Ascending aorta (tissue), 2 donors: ENCODE measurements at regions of chr20 and their contacts with region 1.

Region 1: DNA sequence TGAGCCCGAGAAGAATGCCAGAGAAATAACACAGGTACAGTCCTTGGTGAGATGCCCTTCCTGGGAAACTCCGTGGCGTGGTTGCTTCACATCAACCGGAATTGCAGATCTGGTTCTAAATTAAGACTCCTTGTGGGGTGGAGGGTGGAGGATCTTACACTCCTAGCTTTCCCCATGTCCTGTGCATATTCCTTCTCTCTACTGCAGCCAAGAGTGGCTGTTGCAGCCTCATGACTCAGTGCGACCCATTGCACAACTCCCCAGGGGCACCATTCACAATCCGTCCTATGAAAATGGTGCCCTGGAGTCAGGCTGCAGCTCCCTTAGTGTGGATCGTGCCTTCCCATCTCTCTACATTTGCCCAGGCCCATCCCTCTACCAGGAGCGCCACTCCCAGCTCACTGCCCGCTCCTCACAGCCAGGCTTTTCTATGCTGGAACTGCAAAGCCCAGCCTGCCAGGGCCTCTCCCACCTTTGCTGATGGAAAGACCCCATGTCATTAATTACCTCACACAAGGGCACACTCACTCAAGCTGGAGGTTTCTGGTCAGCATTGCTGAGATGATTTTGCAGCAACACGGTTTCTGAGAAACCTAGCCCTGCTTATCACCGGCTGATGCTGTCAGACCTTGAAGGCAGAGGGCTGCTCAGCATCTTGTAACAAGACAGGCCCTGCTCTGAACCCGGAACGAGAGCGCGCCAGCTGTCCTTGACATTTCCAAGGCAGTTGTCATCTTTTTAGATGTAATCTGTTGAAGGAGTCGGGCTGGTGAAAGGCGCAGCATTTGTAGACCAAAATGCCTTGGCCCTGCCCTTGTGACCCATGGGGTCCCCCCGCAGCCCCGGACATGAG is 39.7 kb downstream of the SIRPA start:
- DNase-seq: peak; percentile 43 to 93
- H3K4me3 ChIP-seq: no peak overlapping the region
- H3K27ac ChIP-seq: peak overlapping the region; percentile 32 to 68
- H3K4me1 ChIP-seq: peaks cover 0 to 8% of the 10 kb centered on the region in 2 donors
- H3K27me3 ChIP-seq: no peaks in the 10 kb centered on the region
- CTCF ChIP-seq: no peak

Region 2: GRCh38 chr20:956330-956951 is 978.5 kb before region 1 on chr20:
- intact Hi-C with region 1: no loop called
- DNase-seq: peak in 1 of 2 donors; percentile 75
- H3K4me3 ChIP-seq: no peak overlapping the region
- H3K27ac ChIP-seq: no peak overlapping the region
- H3K4me1 ChIP-seq: no peaks in the 10 kb centered on the region
- H3K27me3 ChIP-seq: no peaks in the 10 kb centered on the region
- CTCF ChIP-seq: peak; percentile 84 to 93 (median 93)

Region 3: GRCh38 chr20:1674361-1674760 is 260.6 kb before region 1 on chr20:
- intact Hi-C with region 1: no loop called
- DNase-seq: no peak
- H3K4me3 ChIP-seq: no peak overlapping the region
- H3K27ac ChIP-seq: no peak overlapping the region
- H3K4me1 ChIP-seq: no peaks in the 10 kb centered on the region
- H3K27me3 ChIP-seq: no peaks in the 10 kb centered on the region
- CTCF ChIP-seq: no peak

Region 4: DNA sequence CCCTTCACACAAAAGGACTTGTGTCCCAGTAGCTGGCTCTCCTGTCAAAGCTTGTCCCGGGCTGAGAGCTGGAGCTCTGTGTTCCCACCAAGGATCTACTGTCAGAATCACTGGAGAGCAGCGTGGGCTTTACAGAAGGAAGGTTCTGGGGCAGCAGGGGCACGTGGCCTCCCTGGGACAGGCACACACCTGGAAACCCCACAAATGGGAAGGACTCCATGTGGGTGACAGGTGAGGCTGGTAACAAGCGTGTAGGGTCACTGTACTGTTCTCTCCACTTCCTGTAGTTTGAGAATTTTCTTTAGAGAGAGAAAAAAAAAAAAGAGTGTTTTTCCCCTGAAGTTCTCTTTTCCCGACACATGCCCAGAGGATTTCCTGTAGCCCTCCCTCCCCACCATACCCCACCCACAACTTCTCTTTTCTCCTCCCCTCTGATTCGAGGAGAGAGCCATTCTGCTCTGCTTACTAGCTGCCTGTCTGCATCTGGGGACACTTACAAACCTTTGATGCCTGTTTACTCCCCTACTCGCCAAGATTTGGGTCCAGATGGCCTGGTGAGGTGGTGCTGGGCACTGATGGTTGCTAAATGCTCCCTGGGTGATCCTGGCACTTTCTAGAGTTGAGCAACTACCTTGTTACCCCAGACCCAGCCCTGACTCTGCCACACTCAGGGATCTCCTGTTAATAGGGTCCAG is 123.9 kb before region 1 on chr20:
- intact Hi-C with region 1: loop called (anchors 5 kb)
- DNase-seq: peak in 1 of 2 donors; percentile 69
- H3K4me3 ChIP-seq: no peak overlapping the region
- H3K27ac ChIP-seq: peak overlapping the region; percentile 75 to 76
- H3K4me1 ChIP-seq: peaks cover 46 to 65% of the 10 kb centered on the region in 2 donors
- H3K27me3 ChIP-seq: no peaks in the 10 kb centered on the region
- CTCF ChIP-seq: no peak

Region 5: GRCh38 chr20:2246069-2246491 is 311.1 kb after region 1 on chr20:
- intact Hi-C with region 1: no loop called
- DNase-seq: no peak
- H3K4me3 ChIP-seq: no peak overlapping the region
- H3K27ac ChIP-seq: no peak overlapping the region
- H3K4me1 ChIP-seq: no peaks in the 10 kb centered on the region
- H3K27me3 ChIP-seq: no peaks in the 10 kb centered on the region
- CTCF ChIP-seq: no peak